ENCODE measurements at regions of chr22 and their contacts with region 1.

Region 1: GRCh38 chr22:23913661-23914353 is 19.6 kb downstream of the MIF start:
- DNase-seq: peak; percentile 98
- ATAC-seq: peak; percentile 99
- H3K4me3 ChIP-seq: peak overlapping the region; percentile 52 to 96 (median 68)
- H3K4me3 Mint-ChIP-seq: peak overlapping the region; percentile 98
- H3K27ac ChIP-seq: peak overlapping the region; percentile 68 to 92
- H3K27ac Mint-ChIP-seq: peak overlapping the region; percentile 98
- H3K4me1 ChIP-seq: peaks cover 21 to 24% of the 10 kb centered on the region in 2 donors
- H3K4me1 Mint-ChIP-seq: peaks cover 31% of the 10 kb centered on the region
- H3K27me3 ChIP-seq: no peaks in the 10 kb centered on the region
- H3K27me3 Mint-ChIP-seq: no peaks in the 10 kb centered on the region
- CTCF ChIP-seq: no peak

Region 2: GRCh38 chr22:23565942-23566704 is 347.7 kb before region 1 on chr22:
- CTCF ChIA-PET with region 1: no interaction called
- POLR2A ChIA-PET with region 1: no interaction called
- intact Hi-C with region 1: no loop called
- DNase-seq: peak; percentile 41
- ATAC-seq: peak; percentile 41
- H3K4me3 ChIP-seq: peak overlapping the region; percentile 39 to 65 (median 56)
- H3K4me3 Mint-ChIP-seq: peak overlapping the region; percentile 91
- H3K27ac ChIP-seq: no peak overlapping the region
- H3K27ac Mint-ChIP-seq: peak overlapping the region; percentile 32
- H3K4me1 ChIP-seq: peaks cover 8 to 10% of the 10 kb centered on the region in 2 donors
- H3K4me1 Mint-ChIP-seq: peaks cover 7% of the 10 kb centered on the region
- H3K27me3 ChIP-seq: peaks cover 0 to 36% (median 13%) of the 10 kb centered on the region in 4 experiments
- H3K27me3 Mint-ChIP-seq: peaks cover 34% of the 10 kb centered on the region
- CTCF ChIP-seq: no peak

Region 3: DNA sequence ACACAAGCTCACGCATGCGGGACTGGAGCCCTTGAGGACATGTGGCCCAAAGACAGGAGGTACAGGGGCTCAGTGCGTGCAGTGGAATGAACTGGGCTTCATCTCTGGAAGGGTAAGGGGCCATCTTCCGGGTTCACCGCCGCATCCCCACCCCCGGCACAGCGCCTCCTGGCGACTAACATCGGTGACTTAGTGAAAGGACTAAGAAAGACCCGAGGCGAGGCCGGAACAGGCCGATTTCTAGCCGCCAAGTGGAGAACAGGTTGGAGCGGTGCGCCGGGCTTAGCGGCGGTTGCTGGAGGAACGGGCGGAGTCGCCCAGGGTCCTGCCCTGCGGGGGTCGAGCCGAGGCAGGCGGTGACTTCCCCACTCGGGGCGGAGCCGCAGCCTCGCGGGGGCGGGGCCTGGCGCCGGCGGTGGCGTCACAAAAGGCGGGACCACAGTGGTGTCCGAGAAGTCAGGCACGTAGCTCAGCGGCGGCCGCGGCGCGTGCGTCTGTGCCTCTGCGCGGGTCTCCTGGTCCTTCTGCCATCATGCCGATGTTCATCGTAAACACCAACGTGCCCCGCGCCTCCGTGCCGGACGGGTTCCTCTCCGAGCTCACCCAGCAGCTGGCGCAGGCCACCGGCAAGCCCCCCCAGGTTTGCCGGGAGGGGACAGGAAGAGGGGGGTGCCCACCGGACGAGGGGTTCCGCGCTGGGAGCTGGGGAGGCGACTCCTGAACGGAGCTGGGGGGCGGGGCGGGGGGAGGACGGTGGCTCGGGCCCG is 19.7 kb before region 1 on chr22 and contains the start of gene MIF:
- CTCF ChIA-PET with region 1: interaction called, 25 read pairs
- POLR2A ChIA-PET with region 1: interaction called, 22 read pairs
- intact Hi-C with region 1: loop called (anchors 1 kb)
- DNase-seq: peak; percentile 96
- ATAC-seq: peak; percentile 92
- H3K4me3 ChIP-seq: peak within 1 kb of the TSS; percentile 26 to 88 (median 84)
- H3K4me3 Mint-ChIP-seq: peak within 1 kb of the TSS; percentile 93
- H3K27ac ChIP-seq: peak within 1 kb of the TSS; percentile 87 to 89
- H3K27ac Mint-ChIP-seq: peak within 1 kb of the TSS; percentile 98
- H3K4me1 ChIP-seq: peaks cover 13 to 19% of the 10 kb centered on the region in 2 donors
- H3K4me1 Mint-ChIP-seq: peaks cover 28% of the 10 kb centered on the region
- H3K27me3 ChIP-seq: no peaks in the 10 kb centered on the region
- H3K27me3 Mint-ChIP-seq: no peaks in the 10 kb centered on the region
- CTCF ChIP-seq: peak; percentile 76
- total RNA-seq, gene MIF: 125 and 143 TPM in 2 replicates